Activated T-helper 2 cell treated with anti-CD3 and anti-CD28 coated beads, Interferon-gamma antibody, Interleukin-2, Interleukin-4, amounts not matched to agents 10 μg/mL and 5 μg/mL and 100 μg/mL, durations not matched to agents 14 hours and 24 hours and 36 hours (primary cell): ENCODE measurements at regions of chr1 and their contacts with region 1.

Region 1: GRCh38 chr1:182046763-182047162 is 14.7 kb downstream of the ZNF648 start:
- DNase-seq: no peak
- H3K4me3 Mint-ChIP-seq: no peak overlapping the region
- H3K27ac Mint-ChIP-seq: peak overlapping the region; percentile 88
- H3K4me1 Mint-ChIP-seq: peaks cover 30% of the 10 kb centered on the region
- H3K27me3 Mint-ChIP-seq: no peaks in the 10 kb centered on the region

Region 2: DNA sequence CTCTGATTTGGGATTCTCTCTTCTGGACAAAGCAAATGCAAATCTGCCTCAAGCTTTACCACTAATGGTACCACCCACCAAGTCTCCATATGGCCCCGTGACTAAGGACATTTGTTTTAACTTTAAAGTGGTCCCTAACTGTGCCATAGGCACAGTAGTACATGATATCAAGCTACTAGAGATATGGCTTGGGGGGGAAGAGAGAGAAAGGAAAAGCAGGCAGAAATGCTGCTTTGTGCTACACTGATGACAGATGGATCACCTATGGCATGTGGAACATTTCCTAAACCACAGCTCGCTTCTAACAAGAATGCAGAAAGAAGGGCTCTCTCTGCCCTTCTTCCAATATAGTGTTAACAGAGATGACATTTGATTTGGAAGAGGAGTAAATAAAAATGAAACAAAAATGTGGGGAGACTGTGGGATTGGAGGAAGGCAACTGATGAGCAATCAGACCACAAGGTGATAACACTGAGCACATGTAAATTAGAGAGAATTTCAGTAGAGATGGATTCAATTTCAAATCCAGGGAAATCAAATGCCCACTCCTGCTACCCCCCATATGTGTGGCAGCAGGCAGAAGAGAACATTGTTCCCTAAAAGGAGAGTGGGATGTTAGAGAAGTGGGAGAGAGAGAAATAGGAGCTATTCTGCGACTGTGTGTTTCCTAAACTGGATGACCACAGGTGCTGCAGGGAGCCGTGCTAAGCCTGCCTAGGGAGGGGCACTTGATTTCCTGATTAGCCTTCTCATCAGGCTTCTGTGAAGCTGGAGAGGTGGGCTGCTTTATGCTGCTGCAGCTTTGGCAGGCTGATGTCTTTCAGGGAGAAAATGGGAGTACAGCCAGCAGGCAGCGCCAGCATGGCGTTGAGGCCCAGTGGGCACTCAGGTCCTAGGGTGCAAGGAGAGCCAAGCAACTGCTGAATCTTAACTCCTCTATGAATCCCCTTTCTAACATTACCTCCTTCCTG is 60.5 kb before region 1 on chr1:
- intact Hi-C with region 1: no loop called
- DNase-seq: no peak
- H3K4me3 Mint-ChIP-seq: no peak overlapping the region
- H3K27ac Mint-ChIP-seq: no peak overlapping the region
- H3K4me1 Mint-ChIP-seq: peaks cover 5% of the 10 kb centered on the region
- H3K27me3 Mint-ChIP-seq: peaks cover 32% of the 10 kb centered on the region

Region 3: DNA sequence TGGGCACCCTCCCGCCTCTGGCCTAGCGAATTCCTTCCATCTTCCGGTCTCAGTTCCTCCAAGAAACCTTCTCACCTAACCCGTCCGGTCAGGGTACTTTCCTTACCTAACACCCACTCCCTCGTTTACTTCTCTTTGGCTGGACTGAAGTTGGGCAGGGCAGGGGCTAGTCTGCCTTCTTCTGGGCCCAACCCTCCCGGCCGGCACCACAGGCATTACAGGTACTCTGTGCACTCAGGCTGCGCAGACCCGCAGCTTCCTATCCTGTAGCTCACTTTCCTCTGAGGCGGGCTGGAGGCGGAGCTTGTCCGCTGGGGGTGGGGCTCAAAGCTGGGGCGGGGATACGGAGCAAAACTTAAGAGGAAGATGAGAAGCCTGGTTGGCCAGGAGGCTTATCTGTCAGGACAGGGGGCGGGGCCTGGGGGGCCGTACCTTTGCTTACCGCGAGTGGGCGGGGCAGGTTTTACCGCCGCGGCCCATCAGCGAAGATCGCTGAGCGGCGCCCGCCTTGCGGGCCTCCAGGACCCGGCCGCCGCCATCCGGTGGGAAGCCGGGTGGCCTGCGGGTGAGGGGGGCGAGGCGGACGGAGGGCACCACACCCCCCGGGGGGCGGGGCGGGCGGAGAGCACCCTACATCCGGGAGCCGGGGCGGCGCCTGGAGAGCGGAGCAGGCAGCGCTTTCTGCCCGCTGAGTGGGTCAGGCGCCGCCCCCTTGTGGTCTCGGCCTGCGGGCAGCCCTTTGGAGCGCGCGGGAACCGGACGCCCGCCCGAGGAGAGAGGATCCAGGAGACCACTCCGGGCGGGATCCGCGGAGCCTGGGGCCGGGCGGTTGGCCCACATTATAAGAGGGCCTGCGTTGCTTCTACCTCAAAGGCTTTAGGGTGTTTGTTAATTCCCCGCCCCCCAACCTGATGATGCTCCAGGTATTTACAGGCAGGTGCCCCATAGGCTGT is 17.1 kb before region 1 on chr1:
- intact Hi-C with region 1: loop called (anchors 2 kb)
- DNase-seq: peak; percentile 98
- H3K4me3 Mint-ChIP-seq: peak overlapping the region; percentile 97
- H3K27ac Mint-ChIP-seq: peak overlapping the region; percentile 95
- H3K4me1 Mint-ChIP-seq: peaks cover 14% of the 10 kb centered on the region
- H3K27me3 Mint-ChIP-seq: peaks cover 2% of the 10 kb centered on the region

Region 4: GRCh38 chr1:182415789-182416188 is 369.0 kb after region 1 on chr1:
- intact Hi-C with region 1: no loop called
- DNase-seq: no peak
- H3K4me3 Mint-ChIP-seq: no peak overlapping the region
- H3K27ac Mint-ChIP-seq: no peak overlapping the region
- H3K4me1 Mint-ChIP-seq: peaks cover 5% of the 10 kb centered on the region
- H3K27me3 Mint-ChIP-seq: peaks cover 37% of the 10 kb centered on the region